Activated T-helper 2 cell treated with anti-CD3 and anti-CD28 coated beads, Interferon-gamma antibody, Interleukin-2, Interleukin-4, amounts not matched to agents 10 μg/mL and 5 μg/mL and 100 μg/mL, durations not matched to agents 14 hours and 24 hours and 36 hours (primary cell): ENCODE measurements at regions of chr15 and their contacts with region 1.

Region 1: GRCh38 chr15:29269485-29270168 is at the start of gene NSMCE3:
- DNase-seq: peak; percentile 90
- H3K4me3 Mint-ChIP-seq: peak within 1 kb of the TSS; percentile 98
- H3K27ac Mint-ChIP-seq: peak within 1 kb of the TSS; percentile 97
- H3K4me1 Mint-ChIP-seq: peaks cover 38% of the 10 kb centered on the region
- H3K27me3 Mint-ChIP-seq: peaks cover 5% of the 10 kb centered on the region
- total RNA-seq, gene NSMCE3: 10.4 and 10.9 TPM in 2 replicates

Region 2: GRCh38 chr15:29139540-29140459 is 129.8 kb before region 1 on chr15:
- intact Hi-C with region 1: loop called (anchors 2 kb)
- DNase-seq: peak; percentile 42
- H3K4me3 Mint-ChIP-seq: no peak overlapping the region
- H3K27ac Mint-ChIP-seq: no peak overlapping the region
- H3K4me1 Mint-ChIP-seq: peaks cover 5% of the 10 kb centered on the region
- H3K27me3 Mint-ChIP-seq: peaks cover 20% of the 10 kb centered on the region

Region 3: DNA sequence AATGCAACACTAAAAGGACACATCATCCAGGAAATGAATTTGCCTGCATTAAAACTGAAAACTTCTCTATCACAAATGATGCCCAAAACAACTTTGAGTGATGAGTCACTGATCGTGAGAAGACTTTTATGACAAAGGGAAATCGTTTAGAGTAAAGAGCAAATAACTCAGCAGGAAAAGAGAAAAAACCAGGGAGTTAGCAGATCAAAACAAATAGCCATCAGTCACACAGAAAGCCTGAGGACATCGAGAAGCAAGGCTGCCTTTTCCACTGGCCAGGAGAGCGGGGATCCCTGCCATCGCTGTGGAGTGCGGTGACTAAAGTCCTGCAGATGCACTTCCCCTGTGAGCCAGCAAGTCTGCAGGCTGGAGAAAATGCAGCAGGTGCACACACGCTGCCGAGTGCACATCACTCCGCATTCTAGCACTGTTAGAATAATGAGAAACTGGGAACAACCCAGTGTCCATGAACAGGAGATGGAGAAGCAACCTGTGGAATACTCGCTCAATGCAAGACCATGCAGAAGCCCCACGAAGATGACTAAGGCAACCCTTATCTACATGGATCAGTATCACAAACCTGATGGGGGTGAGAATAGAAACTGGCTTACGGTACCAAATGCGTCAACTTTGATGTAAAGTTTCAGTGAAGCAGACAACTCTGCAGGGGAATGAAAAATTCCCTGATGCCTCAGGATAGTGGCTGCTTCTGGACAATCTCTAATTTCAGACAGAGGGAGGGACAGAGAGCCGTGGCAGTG is 86.4 kb before region 1 on chr15:
- intact Hi-C with region 1: loop called (anchors 1 kb)
- DNase-seq: no peak
- H3K4me3 Mint-ChIP-seq: peak overlapping the region; percentile 45
- H3K27ac Mint-ChIP-seq: peak overlapping the region; percentile 60
- H3K4me1 Mint-ChIP-seq: peaks cover 14% of the 10 kb centered on the region
- H3K27me3 Mint-ChIP-seq: peaks cover 34% of the 10 kb centered on the region

Region 4: GRCh38 chr15:29331669-29332068 is 62.0 kb after region 1 on chr15:
- intact Hi-C with region 1: no loop called
- DNase-seq: no peak
- H3K4me3 Mint-ChIP-seq: no peak overlapping the region
- H3K27ac Mint-ChIP-seq: no peak overlapping the region
- H3K4me1 Mint-ChIP-seq: no peaks in the 10 kb centered on the region
- H3K27me3 Mint-ChIP-seq: no peaks in the 10 kb centered on the region